GM12878 (cell line): ENCODE measurements at regions of chr5 and their contacts with region 1.

Region 1: DNA sequence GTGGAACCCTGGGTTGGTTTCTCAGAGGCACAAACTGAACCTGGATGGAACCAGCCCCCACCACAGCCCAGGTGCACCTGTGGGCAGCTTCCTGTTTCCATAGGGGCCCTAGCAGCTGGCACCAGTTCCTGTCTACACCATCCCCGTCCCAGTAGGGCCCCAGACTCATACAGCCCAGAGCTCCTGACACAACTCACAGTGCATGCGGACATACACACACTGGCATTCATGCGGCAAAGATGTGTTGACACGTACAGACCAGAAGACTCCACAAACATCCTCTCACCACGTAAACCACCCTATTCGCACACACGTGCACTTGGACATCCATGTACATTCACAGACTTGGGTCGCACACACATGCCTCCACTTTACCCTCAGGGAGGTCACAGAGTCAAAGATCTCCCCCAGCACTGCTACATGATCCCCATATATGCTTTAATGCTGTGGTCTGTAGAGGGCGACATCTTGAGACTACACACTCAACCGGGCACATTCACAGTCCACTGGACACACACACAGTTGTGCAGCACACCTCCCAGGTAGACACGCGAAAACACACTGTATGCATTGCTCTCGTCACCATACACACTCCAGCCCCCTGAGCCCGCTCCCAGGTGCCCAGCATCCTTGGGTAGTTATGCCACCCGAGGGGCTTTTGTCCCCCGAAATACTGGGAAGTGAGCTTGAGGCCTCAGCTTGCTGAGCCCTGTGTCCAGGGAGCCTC is 22.4 kb downstream of the CXXC5 start:
- DNase-seq: peak; percentile 90
- ATAC-seq: peak; percentile 59
- H3K4me3 ChIP-seq: peak overlapping the region; percentile 84
- H3K27ac ChIP-seq: peak overlapping the region; percentile 99
- H3K4me1 ChIP-seq: peaks cover 54% of the 10 kb centered on the region
- H3K27me3 ChIP-seq: no peaks in the 10 kb centered on the region
- CTCF ChIP-seq: peak; percentile 52 to 65 (median 53)
- EP300 ChIP-seq: peak in 1 of 2 experiments; percentile 37; a peak in 1 of 4 replicates
- POLR2A ChIP-seq: no peak
- RAD21 ChIP-seq: peak; percentile 34

Region 2: DNA sequence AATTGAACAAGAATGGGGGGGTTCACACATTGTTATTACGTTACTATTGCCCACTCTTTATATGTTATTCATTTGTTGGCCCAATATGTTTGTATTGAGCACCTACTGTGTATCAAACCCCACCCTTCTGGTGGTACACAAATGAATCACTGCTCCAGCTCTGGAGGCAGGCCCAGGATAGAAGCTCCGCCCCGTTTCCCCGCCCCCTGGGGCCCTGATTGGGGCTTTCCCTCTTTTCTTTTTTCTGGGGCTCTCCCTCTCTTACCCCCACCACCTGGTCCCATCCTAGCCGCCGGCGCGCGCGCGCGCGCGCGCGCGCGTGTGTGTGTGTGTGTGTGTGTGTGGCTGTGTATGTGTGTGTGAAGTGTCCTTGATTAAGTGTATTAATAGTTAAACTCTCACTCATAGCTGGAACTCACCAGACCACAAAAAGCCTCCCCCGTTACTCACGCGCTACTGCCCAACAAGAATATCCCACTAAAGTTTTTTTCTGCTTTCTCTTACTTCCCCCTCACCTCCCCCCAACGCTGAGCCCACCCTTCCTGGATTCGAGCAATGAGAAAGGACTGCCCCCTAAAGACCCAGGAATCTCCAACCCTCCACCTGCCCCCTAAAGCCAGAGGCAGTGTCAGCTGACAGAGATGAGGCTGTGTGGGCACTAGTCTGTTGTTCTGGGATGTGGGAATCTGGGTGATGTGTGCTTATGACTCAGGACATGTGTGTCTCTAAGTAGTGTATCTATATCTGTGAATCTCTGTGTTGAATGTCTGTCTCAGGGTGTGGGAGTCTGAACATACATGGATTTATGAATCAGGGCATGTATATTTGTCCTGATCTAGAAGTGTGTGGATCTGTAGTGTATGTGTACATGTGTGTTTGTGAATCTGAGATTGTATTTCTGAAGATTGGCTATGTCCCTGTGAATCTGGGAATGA is 18.4 kb before region 1 on chr5:
- CTCF ChIA-PET with region 1: interaction called, 67 read pairs
- POLR2A ChIA-PET with region 1: interaction called, 64 read pairs
- RAD21 ChIA-PET with region 1: interaction called, 186 read pairs
- SMC1A ChIA-PET with region 1: interaction called, 151 read pairs
- in situ Hi-C with region 1: no loop called
- intact Hi-C with region 1: loop called (anchors 1 kb)
- DNase-seq: peak; percentile 85
- ATAC-seq: peak; percentile 51
- H3K4me3 ChIP-seq: peak overlapping the region; percentile 96
- H3K27ac ChIP-seq: peak overlapping the region; percentile 91
- H3K4me1 ChIP-seq: peaks cover 59% of the 10 kb centered on the region
- H3K27me3 ChIP-seq: no peaks in the 10 kb centered on the region
- CTCF ChIP-seq: no peak
- EP300 ChIP-seq: peak; percentile 55 to 62; a peak in 2 of 4 replicates
- POLR2A ChIP-seq: no peak
- RAD21 ChIP-seq: no peak

Region 3: GRCh38 chr5:139696894-139697658 is 26.5 kb after region 1 on chr5:
- CTCF ChIA-PET with region 1: interaction called, 54 read pairs
- POLR2A ChIA-PET with region 1: interaction called, 4 read pairs
- RAD21 ChIA-PET with region 1: interaction called, 20 read pairs
- SMC1A ChIA-PET with region 1: interaction called, 34 read pairs
- in situ Hi-C with region 1: no loop called
- intact Hi-C with region 1: no loop called
- DNase-seq: no peak
- ATAC-seq: peak; percentile 46
- H3K4me3 ChIP-seq: 0 out of 2 replicates have a peak overlapping the region, but pooled peaks have one; percentile 17
- H3K27ac ChIP-seq: no peak overlapping the region
- H3K4me1 ChIP-seq: peaks cover 12% of the 10 kb centered on the region
- H3K27me3 ChIP-seq: peaks cover 0 to 3% of the 10 kb centered on the region in 2 experiments; a peak in 2 of 4 replicates
- CTCF ChIP-seq: no peak
- EP300 ChIP-seq: no peak
- POLR2A ChIP-seq: no peak
- RAD21 ChIP-seq: no peak